ENCODE measurements at regions of chr15 and their contacts with region 1.

Region 1: GRCh38 chr15:99928429-99928981 is 195.3 kb upstream of the LYSMD4 start:
- DNase-seq: peak; percentile 87
- H3K4me3 Mint-ChIP-seq: peak overlapping the region; percentile 82
- H3K27ac Mint-ChIP-seq: peak overlapping the region; percentile 87
- H3K4me1 Mint-ChIP-seq: peaks cover 14% of the 10 kb centered on the region
- H3K27me3 Mint-ChIP-seq: peaks cover 23% of the 10 kb centered on the region

Region 2: GRCh38 chr15:99275525-99276128 is 652.9 kb before region 1 on chr15:
- intact Hi-C with region 1: loop called (anchors 5 kb)
- DNase-seq: no peak
- H3K4me3 Mint-ChIP-seq: no peak overlapping the region
- H3K27ac Mint-ChIP-seq: no peak overlapping the region
- H3K4me1 Mint-ChIP-seq: peaks cover 34% of the 10 kb centered on the region
- H3K27me3 Mint-ChIP-seq: no peaks in the 10 kb centered on the region

Region 3: DNA sequence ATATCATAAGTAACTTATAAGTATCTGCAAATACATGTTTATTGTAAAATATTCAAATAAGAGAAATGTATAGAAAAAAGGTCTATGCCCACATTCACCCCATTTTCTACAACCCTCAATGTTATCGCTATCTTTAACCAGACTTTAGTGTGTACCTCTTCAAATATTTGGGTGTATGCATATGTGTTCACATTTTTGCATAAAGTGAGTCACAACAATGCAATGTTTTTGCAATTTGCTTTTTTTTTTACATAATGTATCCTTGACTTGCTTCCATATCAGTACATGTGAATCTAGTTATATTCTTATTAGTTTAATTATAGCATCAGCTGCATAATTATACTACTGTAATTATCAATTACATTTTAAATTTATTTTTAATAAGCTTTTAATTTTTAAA is 78.0 kb before region 1 on chr15:
- intact Hi-C with region 1: no loop called
- DNase-seq: no peak
- H3K4me3 Mint-ChIP-seq: no peak overlapping the region
- H3K27ac Mint-ChIP-seq: no peak overlapping the region
- H3K4me1 Mint-ChIP-seq: peaks cover 7% of the 10 kb centered on the region
- H3K27me3 Mint-ChIP-seq: no peaks in the 10 kb centered on the region

Region 4: DNA sequence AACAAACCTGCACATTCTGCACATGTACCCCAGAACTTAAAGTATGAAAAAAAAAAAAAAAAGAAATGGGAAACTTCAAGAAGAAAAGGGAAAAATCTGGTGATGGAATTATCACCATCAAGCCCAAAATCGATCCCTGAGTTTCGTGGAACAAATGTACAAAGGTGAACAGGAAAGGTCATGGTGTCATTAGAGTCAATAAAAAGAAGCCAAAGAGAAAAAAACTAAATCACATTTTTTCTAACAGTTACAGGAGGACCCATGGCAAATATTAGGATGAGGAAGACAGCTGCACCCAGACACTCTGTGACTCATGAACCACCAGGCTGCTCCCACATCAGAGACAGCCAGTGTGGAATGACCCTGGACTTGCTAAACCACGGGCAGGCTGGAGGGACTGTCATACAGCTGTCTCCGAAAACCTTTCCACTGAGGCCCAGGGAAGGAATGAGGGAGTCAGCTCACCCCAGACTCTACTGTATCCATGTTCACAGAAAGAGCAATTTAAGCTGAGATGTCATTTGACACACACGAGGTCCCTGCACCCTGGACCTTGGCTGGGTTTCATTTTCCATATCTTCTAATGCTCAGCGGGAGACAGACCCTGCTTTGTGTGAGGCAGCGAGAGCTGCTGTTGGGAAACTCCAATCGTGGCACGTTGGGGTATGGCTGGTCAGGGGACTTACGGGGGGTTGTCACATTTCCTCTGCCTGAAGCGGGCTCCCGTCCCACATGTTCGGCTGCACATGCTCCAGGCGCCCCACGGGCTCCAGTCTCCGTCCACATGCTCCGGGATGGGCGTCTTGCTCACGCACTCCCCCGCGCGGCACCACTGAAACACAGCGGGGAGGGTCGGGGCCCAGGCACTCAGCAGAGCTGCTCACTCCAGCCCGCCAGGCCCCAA is 203.1 kb after region 1 on chr15:
- intact Hi-C with region 1: loop called (anchors 5 kb)
- DNase-seq: peak; percentile 7
- H3K4me3 Mint-ChIP-seq: peak overlapping the region; percentile 15
- H3K27ac Mint-ChIP-seq: no peak overlapping the region
- H3K4me1 Mint-ChIP-seq: no peaks in the 10 kb centered on the region
- H3K27me3 Mint-ChIP-seq: no peaks in the 10 kb centered on the region

Region 5: GRCh38 chr15:100341662-100342560 is 413.4 kb after region 1 on chr15 and contains the start of gene ADAMTS17:
- intact Hi-C with region 1: loop called (anchors 2 kb)
- DNase-seq: peak; percentile 90
- H3K4me3 Mint-ChIP-seq: peak within 1 kb of the TSS; percentile 59
- H3K27ac Mint-ChIP-seq: no peak within 1 kb of the TSS
- H3K4me1 Mint-ChIP-seq: no peaks in the 10 kb centered on the region
- H3K27me3 Mint-ChIP-seq: peaks cover 40% of the 10 kb centered on the region
- total RNA-seq, gene ADAMTS17: 0.83 and 1.3 TPM in 2 replicates

Region 6: GRCh38 chr15:100596792-100597191 is 668.3 kb after region 1 on chr15:
- intact Hi-C with region 1: loop called (anchors 5 kb)
- DNase-seq: peak; percentile 92
- H3K4me3 Mint-ChIP-seq: peak overlapping the region; percentile 86
- H3K27ac Mint-ChIP-seq: peak overlapping the region; percentile 97
- H3K4me1 Mint-ChIP-seq: peaks cover 69% of the 10 kb centered on the region
- H3K27me3 Mint-ChIP-seq: peaks cover 3% of the 10 kb centered on the region

Measured in activated T-helper 1 cell treated with anti-CD3 and anti-CD28 coated beads, Interleukin-12 subunit alpha, Interleukin-12 subunit beta, Interleukin-2, Interleukin-4 antibody, amounts not matched to agents 30 ng/mL and 10 ng/mL and 1 ng/mL, durations not matched to agents 14 hours and 24 hours and 36 hours (primary cell).